ENCODE measurements at regions of chr7 and their contacts with region 1.

Region 1: GRCh38 chr7:22445140-22445743 is 54.7 kb downstream of the STEAP1B start:
- DNase-seq: no peak
- ATAC-seq: peak; percentile 35
- H3K4me3 ChIP-seq: no peak overlapping the region
- H3K27ac ChIP-seq: peak overlapping the region; percentile 67
- H3K4me1 ChIP-seq: peaks cover 42% of the 10 kb centered on the region
- H3K27me3 ChIP-seq: no peaks in the 10 kb centered on the region
- CTCF ChIP-seq: no peak
- EP300 ChIP-seq: 0 out of 4 replicates have a peak, but pooled peaks of 1 of the 2 experiments have one; percentile 27
- POLR2A ChIP-seq: no peak
- RAD21 ChIP-seq: 0 out of 2 replicates have a peak, but pooled peaks have one; percentile 13

Region 2: DNA sequence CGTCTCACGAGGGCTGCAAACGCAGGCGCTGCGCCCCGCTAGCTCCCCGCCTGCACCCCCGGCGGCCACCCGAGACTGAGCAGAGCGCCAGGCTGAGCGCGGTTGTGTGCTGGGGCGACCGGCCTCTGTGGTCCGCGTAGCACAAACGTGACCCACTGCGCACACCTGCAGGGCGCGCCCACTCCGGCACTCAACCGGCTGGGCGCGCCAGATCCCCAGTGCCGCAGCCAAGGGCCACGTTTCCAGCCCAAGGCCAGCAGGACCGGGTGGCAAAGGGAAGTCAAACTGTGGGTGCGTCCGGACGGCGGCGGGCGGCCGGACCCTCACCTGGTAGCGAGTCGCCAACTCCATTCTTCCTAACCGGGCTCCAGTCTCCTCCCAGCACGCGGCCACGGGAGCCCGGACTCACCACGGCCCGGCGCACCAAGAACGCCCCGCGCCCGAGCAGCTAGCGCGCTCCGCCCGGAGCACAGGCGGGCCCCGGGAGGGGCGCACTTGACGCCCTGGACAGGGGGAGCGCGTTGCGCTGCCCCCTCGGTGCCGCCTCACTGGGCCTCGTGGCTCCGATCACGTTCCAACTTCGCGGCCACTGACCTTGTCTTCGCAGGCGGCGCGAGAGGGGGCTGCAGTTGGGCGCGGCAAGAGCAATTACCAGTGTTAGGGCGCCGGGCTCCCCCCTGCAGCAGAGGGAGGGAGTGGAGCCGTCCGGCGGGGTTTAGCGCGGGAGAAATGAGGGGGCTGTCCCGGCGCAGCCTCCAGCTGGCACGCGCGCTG is 499.6 kb before region 1 on chr7 and contains the start of gene CDCA7L:
- CTCF ChIA-PET with region 1: no interaction called
- POLR2A ChIA-PET with region 1: no interaction called
- RAD21 ChIA-PET with region 1: no interaction called
- SMC1A ChIA-PET with region 1: no interaction called
- in situ Hi-C with region 1: no loop called
- intact Hi-C with region 1: loop called (anchors 10 kb)
- DNase-seq: peak; percentile 32
- ATAC-seq: peak; percentile 85
- H3K4me3 ChIP-seq: peak within 1 kb of the TSS; percentile 80
- H3K27ac ChIP-seq: peak within 1 kb of the TSS; percentile 85
- H3K4me1 ChIP-seq: peaks cover 44% of the 10 kb centered on the region
- H3K27me3 ChIP-seq: no peaks in the 10 kb centered on the region
- CTCF ChIP-seq: 0 out of 6 replicates have a peak, but pooled peaks of 1 of the 3 experiments have one; percentile 2
- EP300 ChIP-seq: no peak
- POLR2A ChIP-seq: peak; percentile 93
- RAD21 ChIP-seq: peak; percentile 20; the same call in 1 of the 2 replicates
- polyA plus RNA-seq, gene CDCA7L: 30.3 to 45.2 TPM

Region 3: GRCh38 chr7:22350466-22351328 is 94.5 kb before region 1 on chr7:
- CTCF ChIA-PET with region 1: interaction called, 5 read pairs
- POLR2A ChIA-PET with region 1: interaction called, 3 read pairs
- RAD21 ChIA-PET with region 1: interaction called, 4 read pairs
- SMC1A ChIA-PET with region 1: interaction called, 12 read pairs
- in situ Hi-C with region 1: no loop called
- intact Hi-C with region 1: loop called (anchors 5 kb)
- DNase-seq: peak; percentile 46
- ATAC-seq: peak; percentile 72
- H3K4me3 ChIP-seq: peak overlapping the region; percentile 36; the same call in 1 of the 2 replicates
- H3K27ac ChIP-seq: peak overlapping the region; percentile 79
- H3K4me1 ChIP-seq: peaks cover 27% of the 10 kb centered on the region; the same call in 1 of the 2 replicates
- H3K27me3 ChIP-seq: no peaks in the 10 kb centered on the region; a peak in 1 of 4 replicates
- CTCF ChIP-seq: no peak
- EP300 ChIP-seq: no peak
- POLR2A ChIP-seq: no peak
- RAD21 ChIP-seq: no peak

Region 4: GRCh38 chr7:22386865-22387264 is 58.4 kb before region 1 on chr7:
- CTCF ChIA-PET with region 1: no interaction called
- POLR2A ChIA-PET with region 1: interaction called, 3 read pairs
- RAD21 ChIA-PET with region 1: interaction called, 3 read pairs
- SMC1A ChIA-PET with region 1: interaction called, 7 read pairs
- in situ Hi-C with region 1: no loop called
- intact Hi-C with region 1: loop called (anchors 1 kb)
- DNase-seq: no peak
- ATAC-seq: peak; percentile 80
- H3K4me3 ChIP-seq: no peak overlapping the region
- H3K27ac ChIP-seq: peak overlapping the region; percentile 76
- H3K4me1 ChIP-seq: peaks cover 32% of the 10 kb centered on the region
- H3K27me3 ChIP-seq: no peaks in the 10 kb centered on the region
- CTCF ChIP-seq: no peak
- EP300 ChIP-seq: peak in 1 of 2 experiments; percentile 40; a peak in 1 of 4 replicates
- POLR2A ChIP-seq: no peak
- RAD21 ChIP-seq: no peak

Region 5: GRCh38 chr7:22402250-22402649 is 43.0 kb before region 1 on chr7:
- CTCF ChIA-PET with region 1: interaction called, 3 read pairs
- POLR2A ChIA-PET with region 1: no interaction called
- RAD21 ChIA-PET with region 1: interaction called, 13 read pairs
- SMC1A ChIA-PET with region 1: interaction called, 3 read pairs
- in situ Hi-C with region 1: no loop called
- intact Hi-C with region 1: loop called (anchors 5 kb)
- DNase-seq: no peak
- ATAC-seq: peak; percentile 62
- H3K4me3 ChIP-seq: no peak overlapping the region
- H3K27ac ChIP-seq: peak overlapping the region; percentile 69
- H3K4me1 ChIP-seq: peaks cover 17% of the 10 kb centered on the region
- H3K27me3 ChIP-seq: no peaks in the 10 kb centered on the region; a peak in 1 of 4 replicates
- CTCF ChIP-seq: no peak
- EP300 ChIP-seq: no peak
- POLR2A ChIP-seq: no peak
- RAD21 ChIP-seq: no peak

Region 6: DNA sequence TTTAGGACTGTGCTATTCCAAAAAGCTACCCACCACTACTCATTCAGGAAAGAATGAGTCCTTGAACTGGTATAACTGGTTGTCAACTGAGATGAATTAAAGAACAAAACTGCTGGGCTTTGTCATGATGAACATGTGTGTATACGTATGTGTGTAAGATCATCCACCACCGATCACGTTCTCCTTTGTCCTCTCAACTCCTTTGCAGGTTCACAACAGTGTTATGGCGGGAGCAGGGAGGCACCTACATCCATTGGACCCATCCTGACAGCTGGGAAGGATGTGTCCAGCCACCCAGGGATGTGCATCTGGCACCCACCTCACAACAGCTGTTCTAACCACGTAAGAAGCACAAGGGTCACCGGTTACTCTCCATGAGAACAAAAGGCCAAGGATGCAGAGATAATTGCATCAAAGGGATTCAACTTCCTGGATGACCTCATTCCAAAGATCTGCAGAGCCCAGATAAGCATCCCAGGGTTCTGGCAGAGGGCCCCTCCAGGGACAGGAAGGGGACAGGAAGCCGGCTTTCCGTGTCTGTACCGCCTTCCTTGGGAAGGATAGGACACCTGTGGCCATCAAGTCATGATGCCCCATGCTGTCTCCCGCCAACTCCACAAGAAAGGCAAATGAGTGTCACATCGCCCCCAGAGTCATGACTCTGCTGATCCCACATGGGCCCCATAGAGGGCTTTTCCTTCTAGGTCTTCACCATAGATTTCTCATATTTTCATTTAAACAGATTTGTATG is 11.4 kb before region 1 on chr7:
- CTCF ChIA-PET with region 1: interaction called, 21 read pairs
- POLR2A ChIA-PET with region 1: interaction called, 4 read pairs
- RAD21 ChIA-PET with region 1: interaction called, 13 read pairs
- SMC1A ChIA-PET with region 1: interaction called, 38 read pairs
- in situ Hi-C with region 1: no loop called
- intact Hi-C with region 1: no loop called
- DNase-seq: no peak
- ATAC-seq: no peak
- H3K4me3 ChIP-seq: no peak overlapping the region
- H3K27ac ChIP-seq: no peak overlapping the region
- H3K4me1 ChIP-seq: peaks cover 13% of the 10 kb centered on the region
- H3K27me3 ChIP-seq: no peaks in the 10 kb centered on the region
- CTCF ChIP-seq: no peak
- EP300 ChIP-seq: no peak
- POLR2A ChIP-seq: no peak
- RAD21 ChIP-seq: no peak

Region 7: DNA sequence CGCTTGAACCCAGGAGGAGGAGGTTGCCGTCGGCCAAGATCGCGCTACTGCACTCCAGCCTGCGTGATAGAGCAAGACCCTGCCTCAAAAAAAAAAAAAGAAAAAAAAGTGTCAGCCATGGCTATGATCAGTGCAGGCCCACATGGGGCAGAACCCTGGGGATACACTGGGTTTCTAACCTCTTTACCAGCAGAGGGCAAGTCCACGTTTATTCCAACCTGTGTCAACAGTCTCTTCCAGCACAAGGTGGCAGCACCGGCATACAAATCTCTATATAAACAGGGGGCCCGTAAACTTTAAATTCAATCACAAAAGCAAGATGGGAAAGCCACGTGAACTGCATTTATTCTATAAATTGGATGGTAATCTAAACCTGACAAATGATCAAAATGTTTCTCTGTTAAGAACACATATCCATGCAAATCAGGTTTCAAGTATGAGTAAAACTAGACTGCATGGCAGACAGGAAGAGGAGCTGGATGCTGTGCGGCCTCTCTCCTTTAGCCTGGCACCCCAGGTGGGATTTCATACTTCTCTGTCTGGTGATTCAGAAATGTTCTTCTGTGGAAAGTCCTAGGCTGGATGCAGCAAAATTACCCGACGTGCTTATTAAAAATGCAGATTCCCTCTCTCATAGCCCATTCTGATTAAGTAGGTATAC is 114.7 kb after region 1 on chr7:
- CTCF ChIA-PET with region 1: no interaction called
- POLR2A ChIA-PET with region 1: no interaction called
- RAD21 ChIA-PET with region 1: no interaction called
- SMC1A ChIA-PET with region 1: no interaction called
- in situ Hi-C with region 1: no loop called
- intact Hi-C with region 1: no loop called
- DNase-seq: no peak
- ATAC-seq: peak; percentile 88
- H3K4me3 ChIP-seq: no peak overlapping the region
- H3K27ac ChIP-seq: no peak overlapping the region
- H3K4me1 ChIP-seq: peaks cover 34% of the 10 kb centered on the region
- H3K27me3 ChIP-seq: no peaks in the 10 kb centered on the region; a peak in 1 of 4 replicates
- CTCF ChIP-seq: peak; percentile 78 to 97 (median 86)
- EP300 ChIP-seq: no peak
- POLR2A ChIP-seq: no peak
- RAD21 ChIP-seq: peak; percentile 96

Measured in GM12878 (cell line).